B cell (primary cell): ENCODE measurements at regions of chr6 and their contacts with region 1.

Region 1: DNA sequence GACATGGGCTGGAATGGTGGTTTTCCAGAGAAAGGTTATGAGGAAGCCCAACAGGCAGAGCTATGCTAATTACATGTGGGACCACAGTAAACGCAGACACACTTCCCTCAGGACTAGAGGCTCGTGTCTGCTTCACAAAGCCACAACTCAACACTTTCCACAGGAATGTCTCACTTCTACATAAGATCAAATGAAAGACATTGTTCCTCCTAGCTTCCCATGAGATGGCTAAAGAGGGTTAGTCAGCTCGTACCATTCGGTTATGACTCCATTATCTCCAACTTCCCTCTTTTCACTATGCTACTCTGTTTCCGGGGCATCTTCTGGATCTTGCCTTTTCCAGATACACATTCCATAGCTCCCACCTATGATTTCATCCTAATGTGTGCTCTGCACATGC is 29.1 kb upstream of the ZC3H12D start:
- DNase-seq: no peak
- ATAC-seq: no peak
- H3K4me3 ChIP-seq: no peak overlapping the region
- H3K4me3 Mint-ChIP-seq: no peak overlapping the region
- H3K27ac ChIP-seq: no peak overlapping the region
- H3K27ac Mint-ChIP-seq: peak overlapping the region; percentile 46
- H3K4me1 ChIP-seq: peaks cover 0 to 3% of the 10 kb centered on the region in 2 donors
- H3K4me1 Mint-ChIP-seq: peaks cover 8% of the 10 kb centered on the region
- H3K27me3 ChIP-seq: no peaks in the 10 kb centered on the region
- H3K27me3 Mint-ChIP-seq: no peaks in the 10 kb centered on the region
- CTCF ChIP-seq: no peak

Region 2: GRCh38 chr6:149082286-149082707 is 431.6 kb before region 1 on chr6:
- CTCF ChIA-PET with region 1: interaction called, 23 read pairs
- POLR2A ChIA-PET with region 1: no interaction called
- intact Hi-C with region 1: loop called (anchors 1 kb)
- DNase-seq: peak; percentile 82
- ATAC-seq: peak; percentile 77
- H3K4me3 ChIP-seq: no peak overlapping the region
- H3K4me3 Mint-ChIP-seq: no peak overlapping the region
- H3K27ac ChIP-seq: no peak overlapping the region
- H3K27ac Mint-ChIP-seq: no peak overlapping the region
- H3K4me1 ChIP-seq: peaks cover 0 to 3% of the 10 kb centered on the region in 2 donors
- H3K4me1 Mint-ChIP-seq: peaks cover 7% of the 10 kb centered on the region
- H3K27me3 ChIP-seq: no peaks in the 10 kb centered on the region
- H3K27me3 Mint-ChIP-seq: no peaks in the 10 kb centered on the region
- CTCF ChIP-seq: peak; percentile 93

Region 3: GRCh38 chr6:149445095-149445466 is 68.8 kb before region 1 on chr6:
- CTCF ChIA-PET with region 1: interaction called, 14 read pairs
- POLR2A ChIA-PET with region 1: no interaction called
- intact Hi-C with region 1: no loop called
- DNase-seq: no peak
- ATAC-seq: peak; percentile 10
- H3K4me3 ChIP-seq: no peak overlapping the region
- H3K4me3 Mint-ChIP-seq: no peak overlapping the region
- H3K27ac ChIP-seq: no peak overlapping the region
- H3K27ac Mint-ChIP-seq: peak overlapping the region; percentile 50
- H3K4me1 ChIP-seq: no peaks in the 10 kb centered on the region
- H3K4me1 Mint-ChIP-seq: peaks cover 12% of the 10 kb centered on the region
- H3K27me3 ChIP-seq: no peaks in the 10 kb centered on the region
- H3K27me3 Mint-ChIP-seq: no peaks in the 10 kb centered on the region
- CTCF ChIP-seq: no peak

Region 4: GRCh38 chr6:149459761-149460160 is 54.2 kb before region 1 on chr6:
- CTCF ChIA-PET with region 1: interaction called, 65 read pairs
- POLR2A ChIA-PET with region 1: interaction called, 3 read pairs
- intact Hi-C with region 1: no loop called
- DNase-seq: no peak
- ATAC-seq: no peak
- H3K4me3 ChIP-seq: no peak overlapping the region
- H3K4me3 Mint-ChIP-seq: no peak overlapping the region
- H3K27ac ChIP-seq: no peak overlapping the region
- H3K27ac Mint-ChIP-seq: no peak overlapping the region
- H3K4me1 ChIP-seq: peaks cover 15 to 19% of the 10 kb centered on the region in 2 donors
- H3K4me1 Mint-ChIP-seq: peaks cover 38% of the 10 kb centered on the region
- H3K27me3 ChIP-seq: no peaks in the 10 kb centered on the region
- H3K27me3 Mint-ChIP-seq: no peaks in the 10 kb centered on the region
- CTCF ChIP-seq: no peak

Region 5: GRCh38 chr6:149473080-149474052 is 40.5 kb before region 1 on chr6:
- CTCF ChIA-PET with region 1: interaction called, 60 read pairs
- POLR2A ChIA-PET with region 1: interaction called, 3 read pairs
- intact Hi-C with region 1: loop called (anchors 1 kb)
- DNase-seq: peak; percentile 65
- ATAC-seq: peak; percentile 34
- H3K4me3 ChIP-seq: peak overlapping the region in 4 of 5 experiments; percentile 5 to 55 (median 38)
- H3K4me3 Mint-ChIP-seq: peak overlapping the region; percentile 89
- H3K27ac ChIP-seq: peak overlapping the region; percentile 67 to 84
- H3K27ac Mint-ChIP-seq: peak overlapping the region; percentile 94
- H3K4me1 ChIP-seq: peaks cover 87 to 98% of the 10 kb centered on the region in 2 donors
- H3K4me1 Mint-ChIP-seq: peaks cover 84% of the 10 kb centered on the region
- H3K27me3 ChIP-seq: no peaks in the 10 kb centered on the region
- H3K27me3 Mint-ChIP-seq: no peaks in the 10 kb centered on the region
- CTCF ChIP-seq: peak; percentile 48

Region 6: GRCh38 chr6:149493761-149494320 is 20.1 kb before region 1 on chr6:
- CTCF ChIA-PET with region 1: interaction called, 13 read pairs
- POLR2A ChIA-PET with region 1: interaction called, 12 read pairs
- intact Hi-C with region 1: no loop called
- DNase-seq: no peak
- ATAC-seq: no peak
- H3K4me3 ChIP-seq: peak overlapping the region in 1 of 5 experiments; percentile 37
- H3K4me3 Mint-ChIP-seq: peak overlapping the region; percentile 71
- H3K27ac ChIP-seq: peak overlapping the region in 1 of 2 donors; percentile 79
- H3K27ac Mint-ChIP-seq: peak overlapping the region; percentile 79
- H3K4me1 ChIP-seq: peaks cover 51 to 56% of the 10 kb centered on the region in 2 donors
- H3K4me1 Mint-ChIP-seq: peaks cover 78% of the 10 kb centered on the region
- H3K27me3 ChIP-seq: no peaks in the 10 kb centered on the region
- H3K27me3 Mint-ChIP-seq: no peaks in the 10 kb centered on the region
- CTCF ChIP-seq: no peak

Region 7: DNA sequence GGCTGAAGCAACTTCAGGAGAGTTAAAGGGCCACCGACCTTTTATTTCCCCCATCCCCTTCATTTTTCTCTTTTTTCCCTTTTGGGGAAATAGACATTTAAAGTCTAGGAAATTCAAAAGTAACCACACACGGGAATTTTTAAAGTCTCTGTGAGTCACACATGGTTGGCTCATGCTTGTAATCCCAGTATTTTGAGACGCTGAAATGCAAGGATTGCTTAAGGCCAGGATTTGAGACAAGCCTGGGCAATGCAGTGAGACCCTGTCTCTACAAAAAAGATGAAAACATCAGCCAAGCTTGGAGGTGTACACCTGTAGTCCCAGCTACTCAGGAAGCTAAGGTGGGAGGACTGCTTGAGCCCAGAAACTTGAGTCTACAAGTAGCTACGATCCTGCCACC is 100.4 kb after region 1 on chr6:
- CTCF ChIA-PET with region 1: no interaction called
- POLR2A ChIA-PET with region 1: no interaction called
- intact Hi-C with region 1: no loop called
- DNase-seq: no peak
- ATAC-seq: no peak
- H3K4me3 ChIP-seq: no peak overlapping the region
- H3K4me3 Mint-ChIP-seq: no peak overlapping the region
- H3K27ac ChIP-seq: no peak overlapping the region
- H3K27ac Mint-ChIP-seq: no peak overlapping the region
- H3K4me1 ChIP-seq: no peaks in the 10 kb centered on the region
- H3K4me1 Mint-ChIP-seq: peaks cover 3% of the 10 kb centered on the region
- H3K27me3 ChIP-seq: no peaks in the 10 kb centered on the region
- H3K27me3 Mint-ChIP-seq: no peaks in the 10 kb centered on the region
- CTCF ChIP-seq: no peak

Region 8: GRCh38 chr6:149628875-149629510 is 115.1 kb after region 1 on chr6:
- CTCF ChIA-PET with region 1: no interaction called
- POLR2A ChIA-PET with region 1: no interaction called
- intact Hi-C with region 1: no loop called
- DNase-seq: peak; percentile 55
- ATAC-seq: peak; percentile 70
- H3K4me3 ChIP-seq: no peak overlapping the region
- H3K4me3 Mint-ChIP-seq: peak overlapping the region; percentile 27
- H3K27ac ChIP-seq: peak overlapping the region in 1 of 2 donors; percentile 81
- H3K27ac Mint-ChIP-seq: peak overlapping the region; percentile 89
- H3K4me1 ChIP-seq: peaks cover 7 to 12% of the 10 kb centered on the region in 2 donors
- H3K4me1 Mint-ChIP-seq: peaks cover 16% of the 10 kb centered on the region
- H3K27me3 ChIP-seq: no peaks in the 10 kb centered on the region
- H3K27me3 Mint-ChIP-seq: no peaks in the 10 kb centered on the region
- CTCF ChIP-seq: no peak